Heart right ventricle (tissue), 16 donors: ENCODE measurements at regions of chr1 and their contacts with region 1.

Region 1: GRCh38 chr1:27849951-27850350 is 19.4 kb downstream of the PPP1R8 start:
- DNase-seq: no peak
- ATAC-seq: no peak
- H3K4me3 ChIP-seq: no peak overlapping the region
- H3K27ac ChIP-seq: no peak overlapping the region
- H3K4me1 ChIP-seq: no peaks in the 10 kb centered on the region
- H3K27me3 ChIP-seq: no peaks in the 10 kb centered on the region
- CTCF ChIP-seq: no peak

Region 2: GRCh38 chr1:28199328-28200233 is 349.6 kb after region 1 on chr1:
- intact Hi-C with region 1: loop called in 2 of 10 experiments (anchors 10 kb)
- DNase-seq: no peak
- ATAC-seq: peak in 1 of 8 donors; percentile 42
- H3K4me3 ChIP-seq: no peak overlapping the region
- H3K27ac ChIP-seq: peak overlapping the region in 1 of 10 donors; percentile 61
- H3K4me1 ChIP-seq: peaks cover 0 to 22% (median 12%) of the 10 kb centered on the region in 9 donors
- H3K27me3 ChIP-seq: no peaks in the 10 kb centered on the region
- CTCF ChIP-seq: no peak